ENCODE measurements at regions of chr1 and their contacts with region 1.

Region 1: GRCh38 chr1:186915555-186915954 is 86.8 kb downstream of the PLA2G4A start:
- DNase-seq: peak; percentile 26
- H3K4me3 ChIP-seq: no peak overlapping the region
- H3K27ac ChIP-seq: no peak overlapping the region
- H3K4me1 ChIP-seq: no peaks in the 10 kb centered on the region
- H3K27me3 ChIP-seq: no peaks in the 10 kb centered on the region
- CTCF ChIP-seq: peak; percentile 44; the same call in 1 of the 2 replicates

Region 2: DNA sequence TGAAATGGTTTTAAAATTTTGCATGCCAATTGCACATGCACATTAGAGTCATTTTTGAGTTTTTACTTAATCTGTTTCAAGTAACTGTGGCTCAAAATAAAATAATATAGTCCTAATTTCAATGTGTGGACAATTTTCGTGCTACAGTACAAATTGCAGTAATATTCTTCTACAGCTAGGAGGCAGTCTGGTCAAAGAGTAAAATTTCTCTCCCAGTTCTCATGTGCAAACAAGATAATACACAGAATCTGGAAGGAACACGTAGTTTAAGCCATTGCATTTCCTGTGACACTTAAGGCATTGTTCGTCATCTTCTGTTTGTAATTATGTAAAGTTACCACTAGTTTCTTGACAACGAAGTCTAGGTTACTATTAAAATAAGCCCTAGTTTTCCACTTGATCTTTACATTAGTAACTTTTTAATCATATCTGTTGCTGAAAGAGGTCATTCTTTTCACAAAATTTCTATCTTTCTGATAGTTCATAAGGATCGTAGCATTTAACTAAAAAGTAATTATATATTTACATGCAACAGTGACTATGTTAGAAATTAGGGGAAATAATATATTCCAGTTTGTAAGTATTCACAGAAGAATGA is 511.0 kb before region 1 on chr1:
- CTCF ChIA-PET with region 1: no interaction called
- POLR2A ChIA-PET with region 1: no interaction called
- intact Hi-C with region 1: loop called (anchors 10 kb)
- DNase-seq: peak; percentile 90
- H3K4me3 ChIP-seq: no peak overlapping the region
- H3K27ac ChIP-seq: no peak overlapping the region
- H3K4me1 ChIP-seq: peaks cover 6% of the 10 kb centered on the region
- H3K27me3 ChIP-seq: no peaks in the 10 kb centered on the region
- CTCF ChIP-seq: peak; percentile 89

Region 3: GRCh38 chr1:186482661-186483255 is 432.8 kb before region 1 on chr1:
- CTCF ChIA-PET with region 1: no interaction called
- POLR2A ChIA-PET with region 1: no interaction called
- intact Hi-C with region 1: loop called (anchors 5 kb)
- DNase-seq: peak; percentile 88
- H3K4me3 ChIP-seq: no peak overlapping the region
- H3K27ac ChIP-seq: peak overlapping the region; percentile 11
- H3K4me1 ChIP-seq: peaks cover 10% of the 10 kb centered on the region
- H3K27me3 ChIP-seq: no peaks in the 10 kb centered on the region
- CTCF ChIP-seq: peak; percentile 99

Region 4: DNA sequence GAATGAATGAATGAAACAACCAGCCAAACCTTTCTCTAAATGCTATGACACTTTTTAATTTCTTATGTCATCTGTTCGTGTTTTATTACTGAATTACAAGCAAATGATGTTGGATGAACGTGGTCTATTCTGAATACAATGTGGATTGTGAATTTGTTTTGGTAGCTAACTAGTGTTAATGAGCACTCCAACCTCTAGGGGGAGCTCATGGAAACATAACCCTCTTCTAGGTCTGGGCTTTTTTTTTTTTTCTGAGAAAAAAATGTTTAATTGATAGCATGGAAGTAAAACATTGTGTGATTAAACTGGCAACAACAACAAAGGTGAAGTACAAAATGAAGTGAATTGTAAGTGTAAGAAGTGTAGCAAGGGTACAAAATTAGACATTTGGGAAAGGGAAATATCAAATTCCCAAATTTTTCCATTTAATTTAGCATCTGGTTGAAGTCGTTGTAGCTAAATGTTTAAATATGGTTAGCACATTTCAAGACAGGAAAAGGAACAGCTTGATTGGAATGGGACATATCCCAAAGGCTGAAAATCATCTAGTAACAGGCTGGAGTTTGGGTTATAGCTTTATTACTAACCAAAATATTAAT is 192.7 kb before region 1 on chr1:
- CTCF ChIA-PET with region 1: interaction called, 3 read pairs
- POLR2A ChIA-PET with region 1: no interaction called
- intact Hi-C with region 1: loop called (anchors 5 kb)
- DNase-seq: peak; percentile 78
- H3K4me3 ChIP-seq: no peak overlapping the region
- H3K27ac ChIP-seq: no peak overlapping the region
- H3K4me1 ChIP-seq: no peaks in the 10 kb centered on the region
- H3K27me3 ChIP-seq: no peaks in the 10 kb centered on the region
- CTCF ChIP-seq: peak; percentile 86

Region 5: GRCh38 chr1:186781730-186782129 is 133.8 kb before region 1 on chr1:
- CTCF ChIA-PET with region 1: no interaction called
- POLR2A ChIA-PET with region 1: no interaction called
- intact Hi-C with region 1: no loop called
- DNase-seq: no peak
- H3K4me3 ChIP-seq: no peak overlapping the region
- H3K27ac ChIP-seq: no peak overlapping the region
- H3K4me1 ChIP-seq: no peaks in the 10 kb centered on the region
- H3K27me3 ChIP-seq: no peaks in the 10 kb centered on the region
- CTCF ChIP-seq: no peak